ENCODE measurements at regions of chr16 and their contacts with region 1.

Region 1: DNA sequence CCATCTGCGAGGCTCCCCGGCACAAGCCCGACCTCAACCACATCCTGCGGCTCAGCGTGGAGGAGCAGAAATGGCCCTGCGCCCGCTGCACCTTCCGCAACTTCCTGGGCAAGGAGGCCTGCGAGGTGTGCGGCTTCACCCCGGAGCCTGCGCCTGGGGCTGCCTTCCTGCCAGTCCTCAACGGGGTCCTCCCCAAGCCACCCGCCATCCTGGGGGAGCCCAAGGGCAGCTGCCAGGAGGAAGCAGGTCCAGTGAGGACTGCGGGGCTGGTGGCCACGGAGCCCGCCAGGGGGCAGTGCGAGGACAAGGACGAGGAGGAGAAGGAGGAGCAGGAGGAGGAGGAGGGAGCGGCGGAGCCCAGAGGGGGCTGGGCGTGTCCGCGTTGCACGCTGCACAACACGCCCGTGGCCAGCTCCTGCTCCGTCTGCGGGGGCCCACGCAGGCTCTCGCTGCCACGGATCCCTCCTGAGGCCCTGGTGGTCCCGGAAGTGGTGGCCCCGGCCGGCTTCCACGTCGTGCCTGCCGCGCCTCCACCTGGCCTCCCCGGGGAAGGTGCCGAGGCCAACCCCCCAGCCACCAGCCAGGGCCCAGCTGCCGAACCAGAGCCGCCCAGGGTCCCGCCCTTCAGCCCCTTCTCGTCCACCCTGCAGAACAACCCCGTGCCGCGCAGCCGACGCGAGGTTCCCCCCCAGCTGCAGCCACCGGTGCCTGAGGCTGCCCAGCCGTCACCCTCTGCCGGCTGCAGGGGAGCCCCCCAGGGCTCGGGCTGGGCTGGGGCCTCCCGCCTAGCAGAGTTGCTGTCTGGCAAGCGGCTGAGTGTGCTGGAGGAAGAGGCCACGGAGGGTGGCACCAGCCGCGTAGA is 13.1 kb upstream of the PRR35 start:
- DNase-seq: peak; percentile 88
- ATAC-seq: peak; percentile 59
- H3K4me3 Mint-ChIP-seq: no peak overlapping the region
- H3K27ac Mint-ChIP-seq: no peak overlapping the region
- H3K4me1 Mint-ChIP-seq: no peaks in the 10 kb centered on the region
- H3K27me3 Mint-ChIP-seq: no peaks in the 10 kb centered on the region
- CTCF ChIP-seq: peak; percentile 38; the same call in 1 of the 2 replicates

Region 2: GRCh38 chr16:518858-519257 is 28.3 kb before region 1 on chr16:
- CTCF ChIA-PET with region 1: no interaction called
- POLR2A ChIA-PET with region 1: no interaction called
- DNase-seq: no peak
- ATAC-seq: no peak
- H3K4me3 Mint-ChIP-seq: no peak overlapping the region
- H3K27ac Mint-ChIP-seq: no peak overlapping the region
- H3K4me1 Mint-ChIP-seq: no peaks in the 10 kb centered on the region
- H3K27me3 Mint-ChIP-seq: no peaks in the 10 kb centered on the region
- CTCF ChIP-seq: no peak

Region 3: DNA sequence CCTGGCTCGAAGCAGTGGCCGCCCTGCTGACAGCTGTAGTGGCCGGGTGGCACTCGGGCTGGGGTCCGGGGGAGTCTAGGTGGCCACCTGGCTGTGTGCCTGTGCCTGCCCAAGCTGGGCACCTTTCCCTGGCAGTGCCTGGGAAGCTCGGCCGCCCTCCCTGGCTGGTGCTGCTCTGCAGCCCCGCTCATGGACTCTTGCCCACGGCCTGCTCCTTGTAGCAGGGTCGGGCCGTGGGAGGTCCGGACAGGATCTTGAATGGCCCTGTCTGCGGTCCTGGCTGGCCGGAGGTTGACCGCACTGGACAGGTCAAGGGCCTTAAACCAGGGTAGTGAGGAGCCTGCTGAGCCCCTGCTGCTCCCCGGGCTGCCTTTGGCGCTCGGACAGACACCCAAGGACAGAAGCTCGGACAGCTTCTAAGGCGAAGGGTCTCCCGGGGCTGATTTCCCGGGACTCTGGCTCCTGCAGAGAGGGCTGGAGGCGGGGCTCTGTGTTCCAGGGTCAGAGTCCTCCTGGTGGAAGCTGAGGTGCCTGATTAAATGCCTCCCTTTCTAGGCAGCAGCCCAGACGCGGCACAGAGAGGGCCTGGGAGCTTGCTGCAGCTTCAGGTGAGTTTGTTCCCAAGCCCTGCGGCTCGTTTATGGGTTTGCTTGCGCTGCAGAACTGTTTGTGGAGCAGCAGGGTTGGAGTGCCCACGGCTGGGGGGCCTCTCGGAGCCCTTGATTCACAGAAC is 13.6 kb before region 1 on chr16:
- CTCF ChIA-PET with region 1: interaction called, 11 read pairs
- POLR2A ChIA-PET with region 1: no interaction called
- DNase-seq: peak; percentile 52
- ATAC-seq: peak; percentile 53
- H3K4me3 Mint-ChIP-seq: no peak overlapping the region
- H3K27ac Mint-ChIP-seq: no peak overlapping the region
- H3K4me1 Mint-ChIP-seq: peaks cover 10% of the 10 kb centered on the region
- H3K27me3 Mint-ChIP-seq: no peaks in the 10 kb centered on the region
- CTCF ChIP-seq: no peak